HEK293T (cell line): ENCODE measurements at regions of chr14 and their contacts with region 1.

Region 1: GRCh38 chr14:77028384-77029231 is at the start of gene IRF2BPL:
- DNase-seq: peak; percentile 95

Region 2: DNA sequence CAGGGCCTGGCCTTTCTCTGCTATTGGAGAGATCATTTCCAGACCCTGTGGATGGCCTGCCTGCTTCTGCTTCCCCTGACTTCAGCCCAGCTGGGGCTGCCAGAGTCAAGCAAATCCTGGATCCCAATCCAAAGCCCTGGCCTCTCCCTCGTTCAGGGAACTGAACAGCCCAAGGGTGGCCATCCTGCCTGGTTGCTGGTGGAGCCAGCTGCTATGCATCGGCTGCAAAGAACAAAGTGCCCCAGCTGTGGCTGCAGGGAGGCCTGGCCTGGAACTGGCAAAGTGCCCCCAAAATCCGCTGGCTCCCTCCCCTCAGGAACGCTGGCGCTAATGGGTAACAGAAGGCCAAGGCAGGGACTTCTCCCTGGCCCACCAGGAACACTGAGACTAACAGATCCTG is 146.0 kb before region 1 on chr14:
- CTCF ChIA-PET with region 1: no interaction called
- POLR2A ChIA-PET with region 1: no interaction called
- DNase-seq: no peak

Region 3: DNA sequence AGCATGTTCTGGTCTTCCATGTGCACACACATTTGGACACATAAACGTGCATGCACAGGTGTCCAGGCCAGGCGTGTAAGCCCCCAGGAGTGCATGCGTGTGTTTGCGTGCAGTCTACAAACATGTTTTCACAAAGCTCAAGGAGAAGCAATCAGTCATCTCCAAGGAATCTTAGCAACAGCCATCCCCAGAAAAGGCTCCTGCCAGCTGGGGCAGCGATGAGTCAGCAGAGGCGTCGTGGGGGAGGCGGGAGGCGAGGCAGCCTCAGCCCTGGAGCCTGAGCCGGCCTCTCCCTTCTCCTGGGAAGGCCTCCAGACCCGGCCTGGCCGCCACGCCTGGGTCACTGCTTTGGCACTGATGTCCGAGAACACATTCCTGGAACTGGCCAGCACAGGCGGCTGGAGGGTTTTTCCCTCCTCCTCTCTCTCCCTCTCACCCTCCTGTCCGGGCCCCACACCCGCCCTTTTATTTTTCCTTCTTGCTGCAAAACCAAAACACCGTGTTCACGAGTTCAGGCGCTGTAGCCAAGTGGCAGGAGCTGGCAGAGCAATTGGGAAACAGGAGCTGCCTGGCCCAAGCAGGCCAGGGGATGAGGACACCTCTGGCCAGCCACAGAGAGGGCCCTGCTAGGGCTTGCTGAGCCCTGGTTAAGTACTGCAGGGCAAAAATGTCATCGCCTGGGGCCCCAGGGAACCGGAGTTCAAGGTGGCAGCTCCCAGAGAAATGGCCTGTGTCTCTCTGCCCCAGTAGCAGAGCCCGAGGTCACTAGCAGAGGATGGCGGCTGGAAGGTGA is 109.7 kb before region 1 on chr14:
- CTCF ChIA-PET with region 1: interaction called, 7 read pairs
- POLR2A ChIA-PET with region 1: interaction called, 10 read pairs
- DNase-seq: peak; percentile 69

Region 4: DNA sequence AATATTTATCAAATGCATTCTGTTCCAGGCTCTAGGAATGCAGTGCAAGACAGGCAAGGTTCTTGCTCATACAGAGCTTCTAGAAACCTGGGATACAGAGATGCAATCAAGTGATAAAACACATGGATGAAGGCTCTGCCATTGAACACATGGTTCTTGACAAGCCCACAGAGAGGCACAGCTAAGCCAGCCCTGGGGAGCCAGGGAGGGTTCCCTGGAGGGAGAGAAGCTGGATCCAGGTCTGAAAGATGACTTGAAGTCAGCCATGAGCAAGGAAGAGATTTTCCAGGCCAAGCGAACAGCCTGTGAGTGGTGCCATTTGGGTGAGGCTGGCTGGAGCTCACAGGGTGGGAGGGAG is 66.3 kb before region 1 on chr14:
- CTCF ChIA-PET with region 1: interaction called, 4 read pairs
- POLR2A ChIA-PET with region 1: interaction called, 11 read pairs
- DNase-seq: no peak

Region 5: GRCh38 chr14:77040059-77040740 is 11.6 kb after region 1 on chr14:
- CTCF ChIA-PET with region 1: interaction called, 3 read pairs
- POLR2A ChIA-PET with region 1: interaction called, 94 read pairs
- DNase-seq: peak; percentile 78